PC-3 (cell line): ENCODE measurements at regions of chr4 and their contacts with region 1.

Region 1: DNA sequence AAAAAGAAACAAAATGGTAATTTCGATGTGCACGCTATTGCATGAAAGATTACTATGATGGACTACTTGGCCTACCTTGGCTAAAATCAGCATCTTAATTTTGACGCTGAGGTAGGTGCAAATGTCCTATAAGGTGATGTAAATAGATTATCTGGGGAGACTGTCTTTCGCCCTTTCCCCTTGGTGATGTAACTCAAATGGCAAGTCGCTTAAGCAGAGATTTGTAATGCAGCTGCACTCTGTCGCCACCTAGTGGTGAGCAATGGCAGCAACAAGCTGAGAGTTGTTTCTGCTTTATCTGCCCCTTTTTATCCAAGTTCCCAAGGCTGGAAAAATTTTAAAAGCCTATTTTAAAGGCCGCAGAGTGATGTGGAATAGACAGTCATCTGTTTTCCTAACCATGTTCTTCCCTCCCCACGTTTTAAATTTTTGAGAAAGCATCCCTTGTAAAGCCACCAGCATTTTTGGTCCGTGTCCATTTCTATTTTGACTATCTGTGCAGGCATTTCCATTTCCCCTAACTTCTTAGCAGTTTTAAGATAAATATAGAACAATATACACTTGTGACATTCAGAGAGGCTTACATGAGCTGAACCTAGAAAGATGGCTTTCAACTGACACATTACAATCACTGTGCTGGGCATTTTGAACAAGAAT is 62.4 kb upstream of the PDLIM3 start:
- DNase-seq: peak; percentile 73
- ATAC-seq: peak; percentile 62
- H3K4me3 ChIP-seq: no peak overlapping the region
- H3K27ac ChIP-seq: no peak overlapping the region
- H3K4me1 ChIP-seq: no peaks in the 10 kb centered on the region
- H3K27me3 ChIP-seq: no peaks in the 10 kb centered on the region
- CTCF ChIP-seq: peak; percentile 94

Region 2: DNA sequence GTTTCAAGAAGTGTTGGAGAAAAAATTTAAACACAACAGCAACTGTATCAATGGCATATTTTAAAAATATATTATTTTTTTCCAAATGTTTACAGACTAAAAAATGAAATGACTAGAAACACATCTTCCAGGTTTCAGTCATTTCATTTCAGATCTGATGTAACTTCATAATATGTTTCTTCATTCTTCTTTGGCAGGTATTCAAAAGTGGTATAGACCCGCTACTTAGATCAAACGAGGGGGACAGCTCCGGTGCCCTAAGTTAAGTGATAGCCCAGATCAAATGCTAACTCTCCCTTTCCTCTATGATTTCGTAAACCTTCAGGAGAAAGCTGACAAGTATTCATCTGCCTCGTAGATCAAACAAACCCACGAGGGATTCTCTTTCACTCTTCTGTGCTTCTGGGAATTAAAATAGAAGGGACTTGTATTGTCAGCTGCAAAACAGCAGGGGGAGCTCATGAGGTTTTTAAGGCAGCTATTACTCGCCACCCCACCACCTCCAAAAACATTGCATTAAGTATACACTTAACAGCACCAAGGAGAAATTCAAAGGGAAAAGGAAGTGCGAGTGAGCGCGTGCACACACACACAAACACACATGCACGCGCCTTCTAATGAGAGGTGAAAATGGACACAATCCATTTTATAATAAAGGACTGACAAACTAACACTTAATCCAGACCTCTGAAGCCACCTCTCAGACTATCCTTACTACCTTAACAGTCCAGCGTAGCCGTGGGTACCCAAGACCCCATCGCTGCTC is 558.0 kb before region 1 on chr4:
- CTCF ChIA-PET with region 1: no interaction called
- POLR2A ChIA-PET with region 1: no interaction called
- intact Hi-C with region 1: loop called (anchors 10 kb)
- DNase-seq: peak; percentile 54
- ATAC-seq: peak; percentile 86
- H3K4me3 ChIP-seq: peak overlapping the region; percentile 51; the same call in 1 of the 2 replicates
- H3K27ac ChIP-seq: no peak overlapping the region
- H3K4me1 ChIP-seq: no peaks in the 10 kb centered on the region
- H3K27me3 ChIP-seq: peaks cover 17% of the 10 kb centered on the region
- CTCF ChIP-seq: peak; percentile 77

Region 3: GRCh38 chr4:185394568-185395237 is 203.0 kb before region 1 on chr4:
- CTCF ChIA-PET with region 1: no interaction called
- POLR2A ChIA-PET with region 1: no interaction called
- intact Hi-C with region 1: no loop called
- DNase-seq: peak; percentile 9
- ATAC-seq: no peak
- H3K4me3 ChIP-seq: peak overlapping the region; percentile 66
- H3K27ac ChIP-seq: peak overlapping the region; percentile 95
- H3K4me1 ChIP-seq: peaks cover 26% of the 10 kb centered on the region
- H3K27me3 ChIP-seq: no peaks in the 10 kb centered on the region
- CTCF ChIP-seq: no peak

Region 4: GRCh38 chr4:185405296-185405999 is 192.2 kb before region 1 on chr4:
- CTCF ChIA-PET with region 1: no interaction called
- POLR2A ChIA-PET with region 1: no interaction called
- intact Hi-C with region 1: loop called (anchors 10 kb)
- DNase-seq: no peak
- ATAC-seq: no peak
- H3K4me3 ChIP-seq: no peak overlapping the region
- H3K27ac ChIP-seq: no peak overlapping the region
- H3K4me1 ChIP-seq: no peaks in the 10 kb centered on the region
- H3K27me3 ChIP-seq: no peaks in the 10 kb centered on the region
- CTCF ChIP-seq: no peak

Region 5: GRCh38 chr4:185471235-185472102 is 126.2 kb before region 1 on chr4 and contains the start of gene CCDC110:
- CTCF ChIA-PET with region 1: no interaction called
- POLR2A ChIA-PET with region 1: no interaction called
- intact Hi-C with region 1: loop called (anchors 1 kb)
- DNase-seq: peak; percentile 76
- ATAC-seq: peak; percentile 92
- H3K4me3 ChIP-seq: peak within 1 kb of the TSS; percentile 91
- H3K27ac ChIP-seq: no peak within 1 kb of the TSS
- H3K4me1 ChIP-seq: peaks cover 5% of the 10 kb centered on the region; the same call in 1 of the 2 replicates
- H3K27me3 ChIP-seq: no peaks in the 10 kb centered on the region
- CTCF ChIP-seq: peak; percentile 42; the same call in 1 of the 2 replicates
- total RNA-seq, gene CCDC110: 0.62 TPM in 1 of 2 replicates, not detected in the other

Region 6: DNA sequence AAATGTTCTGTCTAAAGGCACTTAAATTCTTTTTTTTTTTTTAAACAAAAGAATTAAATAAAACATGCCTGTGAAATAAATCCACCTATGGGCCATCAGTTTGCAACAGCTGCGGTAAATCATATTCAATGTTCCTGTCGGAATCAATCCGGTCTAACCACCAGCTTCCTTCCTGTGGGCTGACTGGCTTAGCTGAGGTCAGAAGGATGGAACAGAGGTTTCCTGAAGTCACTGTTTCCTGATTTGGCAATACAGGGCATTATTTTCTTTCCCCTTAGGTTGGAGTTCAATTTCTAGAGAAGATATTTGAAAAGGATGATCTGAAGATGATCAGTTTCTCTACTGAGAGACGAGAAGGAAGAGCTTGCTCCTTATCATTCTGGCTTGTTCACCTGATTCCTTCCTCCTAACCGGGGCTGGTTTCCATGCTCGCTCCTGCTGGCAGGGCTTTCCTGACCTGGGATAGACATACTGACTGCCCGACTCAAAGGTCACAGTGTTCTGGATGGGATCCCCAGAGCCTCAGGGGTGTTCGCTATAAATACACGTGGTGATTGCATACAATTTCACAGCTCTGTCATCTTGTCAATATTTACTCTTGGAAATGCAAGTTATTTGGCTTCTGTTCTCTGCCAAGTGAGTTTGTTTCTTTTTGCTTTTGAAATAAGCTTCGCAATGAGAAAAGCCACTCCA is 84.0 kb before region 1 on chr4:
- CTCF ChIA-PET with region 1: no interaction called
- POLR2A ChIA-PET with region 1: no interaction called
- intact Hi-C with region 1: loop called (anchors 10 kb)
- DNase-seq: peak; percentile 43
- ATAC-seq: peak; percentile 78
- H3K4me3 ChIP-seq: no peak overlapping the region
- H3K27ac ChIP-seq: no peak overlapping the region
- H3K4me1 ChIP-seq: peaks cover 16% of the 10 kb centered on the region
- H3K27me3 ChIP-seq: no peaks in the 10 kb centered on the region
- CTCF ChIP-seq: no peak

Region 7: DNA sequence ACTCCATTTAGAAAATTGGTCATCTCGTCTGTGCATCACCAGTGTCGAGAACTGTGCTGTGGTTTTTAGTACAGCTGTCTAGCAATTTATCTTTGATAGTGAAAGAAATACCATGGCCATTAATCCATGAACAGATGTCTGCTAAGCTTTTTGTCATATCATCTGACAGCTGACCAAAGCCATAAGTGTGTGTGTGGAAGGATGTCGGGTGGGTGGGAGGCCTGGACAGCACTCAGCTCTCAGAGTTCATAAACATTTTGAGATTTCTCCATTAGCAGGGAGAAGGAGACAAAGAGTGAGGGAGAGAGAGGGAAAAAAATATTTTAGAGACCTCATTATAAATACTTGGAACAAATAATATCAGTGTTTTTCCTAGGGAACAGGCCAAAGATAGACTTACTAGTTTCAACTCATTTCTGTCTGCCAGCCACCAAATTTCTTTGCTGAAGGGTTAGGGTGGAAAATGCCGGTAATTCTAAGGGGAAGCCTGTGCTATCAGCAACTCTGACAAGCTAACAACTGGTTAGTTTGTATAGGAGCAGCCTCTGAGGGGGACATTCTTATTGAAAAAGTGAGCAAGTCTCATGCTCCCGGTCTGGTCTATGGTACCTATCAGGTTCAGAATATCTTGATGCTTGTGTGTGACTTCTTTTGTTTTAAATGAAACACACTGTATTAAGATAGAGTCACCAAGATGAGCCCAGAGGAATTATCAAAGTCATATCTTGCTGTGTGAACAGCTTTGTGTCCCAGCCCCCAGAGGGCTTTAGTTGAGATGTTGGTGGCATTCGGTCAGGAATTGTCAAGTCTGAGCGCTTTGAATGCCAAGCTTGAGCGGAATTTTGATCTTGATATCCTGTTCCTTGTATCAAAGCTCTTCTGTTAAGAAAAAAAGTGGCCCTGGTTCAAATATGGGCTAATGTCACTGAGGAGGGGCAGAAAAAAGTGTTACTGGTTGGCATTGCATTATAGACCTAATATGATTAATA is 20.4 kb before region 1 on chr4:
- CTCF ChIA-PET with region 1: no interaction called
- POLR2A ChIA-PET with region 1: interaction called, 30 read pairs
- intact Hi-C with region 1: no loop called
- DNase-seq: no peak
- ATAC-seq: no peak
- H3K4me3 ChIP-seq: no peak overlapping the region
- H3K27ac ChIP-seq: no peak overlapping the region
- H3K4me1 ChIP-seq: peaks cover 11% of the 10 kb centered on the region
- H3K27me3 ChIP-seq: no peaks in the 10 kb centered on the region
- CTCF ChIP-seq: no peak